ENCODE measurements at regions of chr1 and their contacts with region 1.

Region 1: GRCh38 chr1:244047621-244048471 is 3.2 kb upstream of the ZBTB18 start:
- DNase-seq: peak; percentile 85 to 98 (median 97)
- ATAC-seq: peak; percentile 87
- H3K4me3 ChIP-seq: peak overlapping the region; percentile 61
- H3K4me3 Mint-ChIP-seq: peak overlapping the region; percentile 86 to 96 (median 96)
- H3K27ac ChIP-seq: peak overlapping the region; percentile 96
- H3K27ac Mint-ChIP-seq: peak overlapping the region; percentile 97 to 100 (median 98)
- H3K4me1 ChIP-seq: peaks cover 6 to 23% of the 10 kb centered on the region in 2 donors
- H3K4me1 Mint-ChIP-seq: peaks cover 13 to 39% (median 33%) of the 10 kb centered on the region in 7 donors
- H3K27me3 ChIP-seq: no peaks in the 10 kb centered on the region
- H3K27me3 Mint-ChIP-seq: peaks cover 0 to 43% (median 0%) of the 10 kb centered on the region in 5 donors

Region 2: GRCh38 chr1:243596431-243597062 is 451.3 kb before region 1 on chr1:
- CTCF ChIA-PET with region 1: no interaction called
- POLR2A ChIA-PET with region 1: no interaction called
- intact Hi-C with region 1: loop called (anchors 5 to 10 kb)
- DNase-seq: peak in 1 of 9 donors; percentile 36
- ATAC-seq: peak; percentile 81
- H3K4me3 ChIP-seq: no peak overlapping the region
- H3K4me3 Mint-ChIP-seq: peak overlapping the region in 4 of 10 donors; percentile 6 to 73 (median 44)
- H3K27ac ChIP-seq: no peak overlapping the region
- H3K27ac Mint-ChIP-seq: peak overlapping the region in 5 of 9 donors; percentile 28 to 89 (median 40)
- H3K4me1 ChIP-seq: peaks cover 4 to 19% of the 10 kb centered on the region in 2 donors
- H3K4me1 Mint-ChIP-seq: peaks cover 23 to 48% (median 32%) of the 10 kb centered on the region in 7 donors
- H3K27me3 ChIP-seq: no peaks in the 10 kb centered on the region
- H3K27me3 Mint-ChIP-seq: no peaks in the 10 kb centered on the region

Region 3: GRCh38 chr1:244002721-244003120 is 45.1 kb before region 1 on chr1:
- CTCF ChIA-PET with region 1: no interaction called
- POLR2A ChIA-PET with region 1: no interaction called
- intact Hi-C with region 1: loop called in 1 of 2 experiments (anchors 2 kb)
- DNase-seq: peak in 3 of 9 donors; percentile 2 to 18 (median 12)
- ATAC-seq: peak; percentile 48
- H3K4me3 ChIP-seq: no peak overlapping the region
- H3K4me3 Mint-ChIP-seq: peak overlapping the region; percentile 8 to 59 (median 34)
- H3K27ac ChIP-seq: no peak overlapping the region
- H3K27ac Mint-ChIP-seq: peak overlapping the region in 8 of 9 donors; percentile 1 to 71 (median 8)
- H3K4me1 ChIP-seq: peaks cover 0 to 16% of the 10 kb centered on the region in 2 donors
- H3K4me1 Mint-ChIP-seq: peaks cover 15 to 28% (median 21%) of the 10 kb centered on the region in 7 donors
- H3K27me3 ChIP-seq: no peaks in the 10 kb centered on the region
- H3K27me3 Mint-ChIP-seq: no peaks in the 10 kb centered on the region

Region 4: GRCh38 chr1:244074559-244075171 is 26.8 kb after region 1 on chr1:
- CTCF ChIA-PET with region 1: interaction called, 9 read pairs
- POLR2A ChIA-PET with region 1: interaction called, 240 read pairs
- intact Hi-C with region 1: loop called (anchors 1 kb)
- DNase-seq: peak; percentile 36 to 91 (median 86)
- ATAC-seq: peak; percentile 96
- H3K4me3 ChIP-seq: peak overlapping the region; percentile 45
- H3K4me3 Mint-ChIP-seq: peak overlapping the region; percentile 75 to 91 (median 88)
- H3K27ac ChIP-seq: peak overlapping the region; percentile 73
- H3K27ac Mint-ChIP-seq: peak overlapping the region; percentile 50 to 99 (median 97)
- H3K4me1 ChIP-seq: peaks cover 16 to 32% of the 10 kb centered on the region in 2 donors
- H3K4me1 Mint-ChIP-seq: peaks cover 19 to 64% (median 54%) of the 10 kb centered on the region in 7 donors
- H3K27me3 ChIP-seq: no peaks in the 10 kb centered on the region
- H3K27me3 Mint-ChIP-seq: peaks cover 0 to 20% (median 0%) of the 10 kb centered on the region in 5 donors

Region 5: GRCh38 chr1:244302889-244303613 is 255.2 kb after region 1 on chr1:
- CTCF ChIA-PET with region 1: no interaction called
- POLR2A ChIA-PET with region 1: no interaction called
- intact Hi-C with region 1: loop called in 1 of 2 experiments (anchors 1 kb)
- DNase-seq: no peak
- ATAC-seq: no peak
- H3K4me3 ChIP-seq: no peak overlapping the region
- H3K4me3 Mint-ChIP-seq: no peak overlapping the region
- H3K27ac ChIP-seq: no peak overlapping the region
- H3K27ac Mint-ChIP-seq: peak overlapping the region in 3 of 9 donors; percentile 4 to 43 (median 7)
- H3K4me1 ChIP-seq: peaks cover 0 to 3% of the 10 kb centered on the region in 2 donors
- H3K4me1 Mint-ChIP-seq: peaks cover 5 to 13% (median 7%) of the 10 kb centered on the region in 7 donors
- H3K27me3 ChIP-seq: no peaks in the 10 kb centered on the region
- H3K27me3 Mint-ChIP-seq: peaks cover 0 to 2% (median 0%) of the 10 kb centered on the region in 5 donors

Region 6: DNA sequence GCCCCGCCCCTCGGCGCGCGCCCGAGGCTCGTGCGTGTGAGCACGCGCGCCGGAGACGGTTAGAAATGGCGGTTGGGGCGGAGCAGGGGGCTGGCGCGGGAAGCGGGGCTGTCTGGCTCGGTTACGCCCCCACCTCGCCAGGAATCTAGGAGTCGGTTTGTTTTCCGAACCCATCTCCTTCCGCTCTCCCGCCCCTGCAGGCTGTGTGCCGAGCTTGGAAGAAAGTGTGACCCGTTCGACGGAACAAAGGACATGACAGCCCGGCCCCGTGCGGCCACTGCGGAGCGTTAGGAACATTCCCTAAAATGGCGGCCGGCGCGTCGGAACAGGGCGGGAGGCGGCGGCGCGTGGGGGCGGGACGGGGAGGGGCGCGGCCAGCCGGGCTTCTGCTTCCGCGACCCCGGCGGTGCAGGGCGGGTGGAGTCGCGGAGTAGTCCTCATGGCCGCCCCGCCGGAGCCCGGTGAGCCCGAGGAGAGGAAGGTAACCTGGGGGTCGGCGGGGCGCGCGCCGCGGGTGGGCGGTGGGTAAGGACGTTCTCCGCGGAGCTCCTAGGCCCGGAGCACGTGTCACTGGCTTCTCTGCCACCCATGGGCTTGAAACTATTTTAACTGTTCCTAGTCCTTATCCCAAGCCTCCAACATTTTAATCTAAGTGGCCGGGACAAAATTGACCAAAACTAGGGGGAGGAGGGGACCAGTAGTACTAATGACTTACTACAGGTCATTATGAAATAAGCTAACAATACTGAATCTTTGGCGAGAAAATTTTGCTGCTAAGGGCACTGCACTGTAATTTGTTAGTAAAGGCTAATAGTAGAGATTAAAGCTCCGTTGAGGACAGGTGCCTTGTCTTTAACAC is 787.7 kb after region 1 on chr1 and contains the start of gene COX20:
- CTCF ChIA-PET with region 1: no interaction called
- POLR2A ChIA-PET with region 1: interaction called, 5 read pairs
- intact Hi-C with region 1: loop called in 1 of 2 experiments (anchors 5 kb)
- DNase-seq: peak; percentile 84 to 97 (median 93)
- ATAC-seq: peak; percentile 84
- H3K4me3 ChIP-seq: peak within 1 kb of the TSS; percentile 87
- H3K4me3 Mint-ChIP-seq: peak within 1 kb of the TSS; percentile 85 to 100 (median 97)
- H3K27ac ChIP-seq: peak within 1 kb of the TSS; percentile 96
- H3K27ac Mint-ChIP-seq: peak within 1 kb of the TSS; percentile 99 to 100 (median 100)
- H3K4me1 ChIP-seq: peaks cover 17 to 27% of the 10 kb centered on the region in 2 donors
- H3K4me1 Mint-ChIP-seq: peaks cover 34 to 55% (median 48%) of the 10 kb centered on the region in 7 donors
- H3K27me3 ChIP-seq: no peaks in the 10 kb centered on the region
- H3K27me3 Mint-ChIP-seq: no peaks in the 10 kb centered on the region
- total RNA-seq, gene COX20: 23.5 to 31.0 (median 27.8) TPM